HEK293T (cell line): ENCODE measurements at regions of chr6 and their contacts with region 1.

Region 1: GRCh38 chr6:33248925-33249731 is 22.5 kb downstream of the VPS52 start:
- DNase-seq: peak; percentile 91

Region 2: GRCh38 chr6:33126101-33126714 is 122.9 kb before region 1 on chr6:
- CTCF ChIA-PET with region 1: interaction called, 19 read pairs
- POLR2A ChIA-PET with region 1: interaction called, 6 read pairs
- DNase-seq: peak; percentile 66

Region 3: DNA sequence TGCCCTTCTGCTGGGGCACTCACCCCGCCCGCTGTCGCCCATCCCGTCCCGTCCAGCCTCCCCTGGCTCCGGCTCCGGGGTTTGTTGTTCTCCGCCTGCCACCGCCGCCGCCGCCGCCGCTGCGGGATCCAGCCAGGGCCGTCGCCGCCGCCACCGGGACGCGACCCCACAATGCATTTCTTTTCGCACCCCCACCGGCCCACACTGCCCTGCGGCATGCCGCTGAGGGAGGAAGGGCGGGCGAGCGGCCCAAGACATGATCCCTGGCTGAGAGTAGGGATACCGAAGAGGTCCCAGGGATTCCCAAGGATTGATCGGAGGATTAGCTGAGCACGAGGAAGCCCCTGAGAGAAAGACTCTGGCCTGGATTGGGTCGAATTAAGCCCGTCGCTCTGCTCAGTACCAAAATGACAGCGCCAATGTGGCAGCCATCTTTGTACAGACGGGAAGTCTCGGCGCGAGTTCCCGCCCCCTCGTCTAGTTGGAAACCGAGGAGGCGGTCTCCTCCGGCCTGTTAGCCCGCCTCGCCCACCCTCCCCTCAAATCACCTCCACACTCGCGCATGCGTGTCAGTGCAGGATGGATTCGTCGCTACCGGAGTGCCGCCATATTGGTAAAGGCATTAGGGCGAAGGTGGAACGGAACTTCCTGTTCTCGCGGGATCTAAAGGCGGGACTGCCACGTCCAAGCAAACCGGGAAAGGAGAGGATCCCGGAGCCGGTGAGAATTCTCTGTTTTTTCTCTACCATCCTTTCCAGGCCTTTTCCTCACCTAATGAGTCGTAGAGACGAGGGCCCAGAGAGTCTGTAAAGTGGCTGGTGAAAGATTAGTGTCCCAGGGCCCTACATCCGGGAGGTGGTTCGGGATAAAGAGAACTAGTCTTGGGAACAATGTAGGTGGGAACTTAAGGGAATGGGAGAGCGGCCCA is 48.6 kb before region 1 on chr6 and contains the starts of genes RXRB and SLC39A7:
- CTCF ChIA-PET with region 1: interaction called, 11 read pairs
- POLR2A ChIA-PET with region 1: interaction called, 25 read pairs
- DNase-seq: peak; percentile 94

Region 4: GRCh38 chr6:33208091-33208967 is 40.8 kb before region 1 on chr6 and contains the start of gene RING1:
- CTCF ChIA-PET with region 1: interaction called, 5 read pairs
- POLR2A ChIA-PET with region 1: interaction called, 64 read pairs
- DNase-seq: peak; percentile 89

Region 5: DNA sequence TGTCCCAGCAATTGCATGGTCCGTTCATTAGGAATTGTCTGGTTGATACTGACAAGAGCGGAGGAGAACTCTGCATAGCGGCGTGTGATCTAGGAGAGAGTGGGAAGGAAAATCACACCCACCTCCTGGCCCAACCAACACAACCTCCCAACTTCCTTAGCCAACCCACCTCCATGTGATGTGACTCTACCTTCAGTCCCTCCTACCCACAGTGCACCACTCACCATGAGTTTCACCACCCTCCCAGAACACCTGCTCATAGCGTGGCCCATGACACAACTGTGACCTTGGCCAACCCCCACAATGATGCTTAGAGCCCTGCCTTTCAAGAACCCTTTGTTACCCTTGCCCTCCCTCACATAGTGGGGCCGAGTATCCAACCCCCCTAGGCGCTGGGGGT is 14.9 kb after region 1 on chr6:
- CTCF ChIA-PET with region 1: interaction called, 8 read pairs
- POLR2A ChIA-PET with region 1: interaction called, 54 read pairs
- DNase-seq: no peak

Region 6: GRCh38 chr6:33271458-33272274 is 22.5 kb after region 1 on chr6 and contains the starts of genes RPS18 and VPS52:
- CTCF ChIA-PET with region 1: interaction called, 4 read pairs
- POLR2A ChIA-PET with region 1: interaction called, 54 read pairs
- DNase-seq: peak; percentile 89

Region 7: DNA sequence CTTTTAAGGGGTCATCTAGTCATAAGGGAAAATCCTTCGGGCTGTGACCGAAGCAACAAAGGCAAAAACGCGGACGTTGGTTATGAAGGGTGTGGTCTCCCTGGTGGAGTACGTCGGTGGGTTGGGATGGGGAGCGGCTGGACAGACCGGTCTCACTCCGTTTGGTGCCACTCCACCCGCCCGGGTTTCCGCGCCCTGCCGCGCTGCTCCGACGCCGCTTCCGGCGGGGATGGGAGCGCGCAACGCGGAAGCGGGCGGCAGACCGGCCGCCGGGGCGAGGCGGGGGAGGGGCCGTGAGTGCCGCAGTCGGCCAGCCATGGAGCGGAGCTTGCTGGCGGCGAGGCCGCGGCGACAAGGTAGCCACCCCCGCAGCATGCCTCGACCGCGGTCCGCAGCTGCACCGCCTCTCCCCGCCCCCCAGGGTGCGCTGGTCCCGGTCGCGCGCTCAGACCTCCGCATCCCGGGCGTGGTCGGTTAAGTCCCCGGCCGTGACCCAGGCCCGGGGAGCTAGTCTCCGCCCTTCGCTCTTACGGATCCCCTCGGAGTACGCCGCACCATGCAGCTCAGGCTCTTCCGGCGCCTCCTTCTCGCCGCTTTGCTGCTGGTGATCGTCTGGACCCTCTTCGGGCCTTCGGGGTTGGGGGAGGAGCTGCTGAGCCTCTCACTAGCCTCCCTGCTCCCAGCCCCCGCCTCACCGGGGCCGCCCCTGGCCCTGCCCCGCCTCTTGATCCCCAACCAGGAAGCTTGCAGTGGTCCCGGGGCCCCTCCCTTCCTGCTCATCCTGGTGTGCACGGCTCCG is 27.9 kb after region 1 on chr6 and contains the start of gene B3GALT4:
- CTCF ChIA-PET with region 1: interaction called, 4 read pairs
- POLR2A ChIA-PET with region 1: interaction called, 54 read pairs
- DNase-seq: peak; percentile 64

Region 8: DNA sequence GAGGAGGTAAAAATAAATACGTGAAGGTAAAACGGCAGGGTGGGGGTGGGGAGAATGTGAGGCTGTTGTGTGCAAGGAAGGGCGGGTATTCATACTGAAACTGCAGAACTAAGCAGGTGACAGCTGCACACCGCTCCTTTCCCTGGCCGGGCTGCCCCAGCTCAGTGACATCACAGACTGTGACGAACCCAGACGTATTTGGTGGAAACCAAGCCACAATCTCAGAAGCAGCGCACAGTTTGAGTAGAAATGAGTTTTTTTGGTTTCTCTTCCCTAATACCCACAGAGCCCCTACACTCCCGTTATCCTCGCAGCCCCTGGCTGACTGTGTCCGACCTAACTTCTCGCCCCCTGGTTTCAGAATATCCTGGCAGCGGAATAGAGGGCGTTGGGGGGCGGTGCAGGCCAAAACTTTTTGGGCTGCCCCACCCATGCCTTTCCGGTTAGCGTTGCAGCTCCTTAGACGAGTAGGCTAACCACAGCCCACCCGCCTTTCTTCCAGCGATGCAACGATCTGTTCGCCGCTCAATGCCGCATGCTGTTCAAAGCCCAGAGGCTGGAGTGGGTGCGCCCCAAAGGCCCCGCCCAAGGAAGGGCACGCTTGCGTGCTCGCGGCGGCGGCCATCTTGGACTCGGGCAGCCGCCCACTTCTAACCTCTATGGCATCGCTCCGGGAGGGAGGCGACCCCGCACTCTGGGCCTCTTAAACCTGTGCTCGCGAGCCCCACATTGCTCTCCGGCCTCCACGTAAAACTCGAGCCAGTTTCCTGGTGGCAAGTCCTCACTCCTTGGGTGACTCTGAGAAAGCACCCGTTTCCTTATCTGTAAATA is 321.9 kb after region 1 on chr6:
- CTCF ChIA-PET with region 1: no interaction called
- POLR2A ChIA-PET with region 1: no interaction called
- DNase-seq: peak; percentile 86